WTC11 (cell line): ENCODE measurements at regions of chr4 and their contacts with region 1.

Region 1: DNA sequence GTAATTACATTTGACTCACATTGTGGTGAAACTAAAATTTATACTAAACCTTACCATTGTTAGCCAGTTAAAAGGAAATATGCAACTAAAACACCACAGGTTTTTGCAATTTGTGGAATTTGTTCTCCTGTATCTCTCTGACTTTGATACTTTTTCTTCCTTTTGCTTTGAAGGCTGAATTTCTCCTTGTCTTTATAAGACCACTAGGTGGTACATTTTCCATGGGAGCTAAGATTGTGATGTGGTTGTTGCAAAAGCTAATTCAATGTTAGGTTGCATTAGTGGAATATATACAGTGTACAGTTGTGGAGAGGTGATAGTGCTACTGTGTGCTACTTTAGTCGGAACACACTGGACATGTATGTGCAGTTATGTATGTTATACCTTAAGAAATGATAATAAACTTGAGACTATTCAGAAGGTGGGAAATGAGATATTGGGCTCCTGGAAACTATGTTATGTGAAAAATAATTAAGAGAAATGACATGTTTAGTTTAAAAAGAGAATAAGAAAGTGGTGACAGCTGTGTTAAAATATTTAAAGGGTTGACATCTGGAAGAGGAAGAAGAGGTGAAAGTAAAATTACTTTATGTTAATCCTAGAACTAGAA is 70.3 kb downstream of the ARL9 start:
- DNase-seq: no peak
- ATAC-seq: no peak
- H3K4me3 Mint-ChIP-seq: no peak overlapping the region
- H3K27ac Mint-ChIP-seq: no peak overlapping the region
- H3K4me1 Mint-ChIP-seq: no peaks in the 10 kb centered on the region
- H3K27me3 Mint-ChIP-seq: peaks cover 10% of the 10 kb centered on the region; the same call in 1 of the 2 replicates
- CTCF ChIP-seq: no peak

Region 2: GRCh38 chr4:56372774-56373173 is 203.2 kb before region 1 on chr4:
- CTCF ChIA-PET with region 1: no interaction called
- POLR2A ChIA-PET with region 1: no interaction called
- DNase-seq: no peak
- ATAC-seq: no peak
- H3K4me3 Mint-ChIP-seq: no peak overlapping the region
- H3K27ac Mint-ChIP-seq: no peak overlapping the region
- H3K4me1 Mint-ChIP-seq: no peaks in the 10 kb centered on the region
- H3K27me3 Mint-ChIP-seq: no peaks in the 10 kb centered on the region
- CTCF ChIP-seq: no peak

Region 3: DNA sequence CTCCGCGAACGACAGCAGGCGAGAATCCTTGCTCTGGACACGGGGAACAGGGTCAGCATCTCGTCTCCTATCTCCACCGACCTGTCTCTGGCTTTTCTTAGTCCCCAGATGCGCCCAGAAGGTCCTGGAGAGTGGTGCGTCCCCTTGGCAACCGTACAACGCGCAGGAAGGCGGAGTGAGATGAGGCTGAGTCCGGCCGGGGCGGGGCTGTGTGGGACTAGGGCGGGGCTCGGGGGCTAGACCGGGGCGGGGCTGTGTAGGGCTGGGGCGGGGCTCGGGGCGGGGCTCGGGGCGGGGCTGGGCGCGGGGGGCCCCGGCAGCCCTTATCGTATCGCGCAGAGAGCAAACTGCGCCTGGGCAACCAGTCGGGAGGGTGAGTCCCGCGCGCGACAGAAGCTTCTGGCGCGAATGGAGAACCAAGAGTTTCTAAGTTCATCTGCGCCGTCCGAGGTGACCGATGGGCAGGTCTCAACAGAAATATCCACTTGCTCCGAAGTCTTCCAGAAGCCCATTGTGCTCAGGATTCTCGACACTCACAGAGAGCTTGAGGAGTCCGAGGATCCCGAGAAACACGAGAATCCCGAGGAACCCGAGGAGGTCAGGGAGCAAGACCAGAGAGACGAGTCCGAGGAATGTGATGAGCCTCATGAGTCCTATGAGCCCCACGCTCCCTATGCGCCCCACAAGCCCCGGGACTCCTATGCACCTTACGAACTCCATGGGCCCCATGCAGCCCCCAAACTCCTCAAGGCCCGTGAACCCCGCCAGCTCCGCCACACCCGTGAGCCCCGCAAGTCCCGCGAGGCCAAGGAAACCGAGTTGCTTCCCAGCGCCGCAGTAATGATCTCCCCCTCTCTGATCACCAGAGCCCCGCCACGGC is 45.4 kb before region 1 on chr4:
- CTCF ChIA-PET with region 1: no interaction called
- POLR2A ChIA-PET with region 1: no interaction called
- DNase-seq: peak; percentile 90
- ATAC-seq: peak; percentile 99
- H3K4me3 Mint-ChIP-seq: peak overlapping the region; percentile 55
- H3K27ac Mint-ChIP-seq: no peak overlapping the region
- H3K4me1 Mint-ChIP-seq: no peaks in the 10 kb centered on the region
- H3K27me3 Mint-ChIP-seq: peaks cover 47% of the 10 kb centered on the region
- CTCF ChIP-seq: no peak

Region 4: DNA sequence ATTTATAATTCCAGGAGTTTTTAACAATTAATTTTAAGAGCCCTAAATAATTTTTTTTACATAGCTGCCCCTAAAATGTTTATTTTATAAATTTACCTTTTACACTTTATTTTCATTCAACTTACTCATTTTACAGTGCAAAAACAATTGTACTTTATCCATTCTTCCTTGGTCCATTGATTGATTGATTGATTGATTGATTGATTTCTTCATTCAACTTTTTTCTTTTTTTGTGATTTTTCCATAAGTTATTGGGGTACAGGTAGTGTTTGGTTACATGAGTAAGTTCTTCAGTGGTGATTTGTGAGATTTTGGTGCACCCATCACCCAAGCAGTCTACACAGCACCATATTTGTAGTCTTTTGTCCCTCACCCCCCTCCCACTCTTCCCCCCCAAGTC is 11.2 kb after region 1 on chr4:
- CTCF ChIA-PET with region 1: no interaction called
- POLR2A ChIA-PET with region 1: no interaction called
- DNase-seq: no peak
- ATAC-seq: no peak
- H3K4me3 Mint-ChIP-seq: no peak overlapping the region
- H3K27ac Mint-ChIP-seq: no peak overlapping the region
- H3K4me1 Mint-ChIP-seq: no peaks in the 10 kb centered on the region
- H3K27me3 Mint-ChIP-seq: peaks cover 8% of the 10 kb centered on the region; the same call in 1 of the 2 replicates
- CTCF ChIP-seq: no peak

Region 5: GRCh38 chr4:56650262-56651055 is 74.5 kb after region 1 on chr4:
- CTCF ChIA-PET with region 1: interaction called, 11 read pairs
- POLR2A ChIA-PET with region 1: no interaction called
- DNase-seq: no peak
- ATAC-seq: peak; percentile 79
- H3K4me3 Mint-ChIP-seq: no peak overlapping the region
- H3K27ac Mint-ChIP-seq: no peak overlapping the region
- H3K4me1 Mint-ChIP-seq: peaks cover 11% of the 10 kb centered on the region
- H3K27me3 Mint-ChIP-seq: peaks cover 71% of the 10 kb centered on the region
- CTCF ChIP-seq: no peak